Activated naive CD4-positive, alpha-beta T cell treated with anti-CD3 and anti-CD28 coated beads for 36 hours (primary cell): ENCODE measurements at regions of chr12 and their contacts with region 1.

Region 1: GRCh38 chr12:65169320-65170208 is at the start of gene LEMD3:
- DNase-seq: peak; percentile 96
- H3K4me3 Mint-ChIP-seq: peak within 1 kb of the TSS; percentile 85
- H3K27ac Mint-ChIP-seq: peak within 1 kb of the TSS; percentile 91
- H3K4me1 Mint-ChIP-seq: peaks cover 19% of the 10 kb centered on the region
- H3K27me3 Mint-ChIP-seq: no peaks in the 10 kb centered on the region
- total RNA-seq, gene LEMD3: 16.5 to 17.5 TPM

Region 2: GRCh38 chr12:64459394-64459891 is 710.1 kb before region 1 on chr12:
- CTCF ChIA-PET with region 1: no interaction called
- intact Hi-C with region 1: loop called (anchors 5 kb)
- DNase-seq: peak; percentile 14
- H3K4me3 Mint-ChIP-seq: peak overlapping the region; percentile 72
- H3K27ac Mint-ChIP-seq: peak overlapping the region; percentile 85
- H3K4me1 Mint-ChIP-seq: peaks cover 38% of the 10 kb centered on the region
- H3K27me3 Mint-ChIP-seq: no peaks in the 10 kb centered on the region

Region 3: GRCh38 chr12:65121049-65121955 is 48.3 kb before region 1 on chr12 and contains the start of gene WIF1:
- CTCF ChIA-PET with region 1: interaction called, 3 read pairs
- intact Hi-C with region 1: loop called (anchors 2 kb)
- DNase-seq: peak; percentile 28
- H3K4me3 Mint-ChIP-seq: peak within 1 kb of the TSS; percentile 41
- H3K27ac Mint-ChIP-seq: no peak within 1 kb of the TSS
- H3K4me1 Mint-ChIP-seq: peaks cover 3% of the 10 kb centered on the region
- H3K27me3 Mint-ChIP-seq: peaks cover 24% of the 10 kb centered on the region
- total RNA-seq, gene WIF1: 0.20 TPM in 1 of 2 experiments, not detected in the other

Region 4: DNA sequence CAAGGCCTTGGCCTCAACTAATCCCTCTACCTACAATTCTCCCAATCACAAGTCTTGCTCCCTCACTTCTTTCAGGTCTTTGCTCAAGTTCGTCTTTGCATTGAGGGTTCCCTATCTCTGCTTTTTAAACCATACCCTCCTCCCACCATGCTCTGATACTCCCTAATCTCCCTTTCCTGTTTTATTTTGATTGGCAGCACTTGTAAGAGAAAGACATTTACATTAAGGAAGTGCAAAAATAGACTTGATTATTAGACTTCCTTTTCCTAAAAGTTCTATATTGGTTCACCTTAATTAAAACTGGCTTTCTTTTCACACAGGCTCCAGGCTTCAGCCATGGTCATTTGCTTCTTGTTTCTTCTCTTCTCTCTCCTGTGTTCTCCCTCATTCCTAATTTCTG is 30.2 kb before region 1 on chr12:
- CTCF ChIA-PET with region 1: no interaction called
- intact Hi-C with region 1: no loop called
- DNase-seq: no peak
- H3K4me3 Mint-ChIP-seq: no peak overlapping the region
- H3K27ac Mint-ChIP-seq: no peak overlapping the region
- H3K4me1 Mint-ChIP-seq: no peaks in the 10 kb centered on the region
- H3K27me3 Mint-ChIP-seq: peaks cover 13% of the 10 kb centered on the region

Region 5: DNA sequence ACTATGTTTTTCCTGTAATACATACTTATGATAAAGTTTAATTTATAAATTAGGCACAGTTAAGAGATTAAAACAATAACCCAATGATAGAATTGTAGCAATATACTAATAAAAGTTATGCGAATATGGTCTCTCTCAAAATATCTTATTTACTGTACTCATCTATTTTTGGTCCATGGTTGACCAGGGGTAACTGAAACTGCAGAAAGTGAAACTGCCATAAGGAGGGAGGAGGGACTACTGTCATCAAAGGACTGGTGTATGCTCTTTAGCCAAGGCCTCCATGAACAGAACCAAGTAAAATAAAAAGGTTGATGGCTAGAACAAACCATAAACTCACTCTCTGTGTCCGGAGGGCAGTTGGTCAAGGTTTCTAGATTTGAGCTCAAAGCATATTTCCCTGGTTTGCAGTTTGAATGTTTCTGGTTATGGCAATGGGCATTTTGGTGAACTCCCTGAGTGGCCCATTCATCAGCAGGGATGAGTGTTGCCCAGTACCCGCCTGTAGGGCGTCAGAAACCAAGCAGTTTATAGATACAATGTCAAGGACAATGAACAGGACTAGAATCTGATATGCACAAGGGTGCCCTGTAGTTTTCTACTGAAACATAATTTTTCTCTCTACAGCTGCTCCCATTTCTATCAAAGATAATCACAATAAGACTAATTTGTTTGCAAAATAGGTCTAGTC is 19.6 kb after region 1 on chr12:
- CTCF ChIA-PET with region 1: interaction called, 3 read pairs
- intact Hi-C with region 1: loop called (anchors 2 kb)
- DNase-seq: no peak
- H3K4me3 Mint-ChIP-seq: no peak overlapping the region
- H3K27ac Mint-ChIP-seq: no peak overlapping the region
- H3K4me1 Mint-ChIP-seq: peaks cover 58% of the 10 kb centered on the region
- H3K27me3 Mint-ChIP-seq: no peaks in the 10 kb centered on the region

Region 6: GRCh38 chr12:65232476-65233077 is 63.0 kb after region 1 on chr12:
- CTCF ChIA-PET with region 1: interaction called, 8 read pairs
- intact Hi-C with region 1: loop called (anchors 1 kb)
- DNase-seq: no peak
- H3K4me3 Mint-ChIP-seq: no peak overlapping the region
- H3K27ac Mint-ChIP-seq: no peak overlapping the region
- H3K4me1 Mint-ChIP-seq: peaks cover 11% of the 10 kb centered on the region
- H3K27me3 Mint-ChIP-seq: no peaks in the 10 kb centered on the region

Region 7: GRCh38 chr12:65403188-65403587 is 233.6 kb after region 1 on chr12:
- CTCF ChIA-PET with region 1: no interaction called
- intact Hi-C with region 1: no loop called
- DNase-seq: no peak
- H3K4me3 Mint-ChIP-seq: no peak overlapping the region
- H3K27ac Mint-ChIP-seq: no peak overlapping the region
- H3K4me1 Mint-ChIP-seq: no peaks in the 10 kb centered on the region
- H3K27me3 Mint-ChIP-seq: no peaks in the 10 kb centered on the region

Region 8: DNA sequence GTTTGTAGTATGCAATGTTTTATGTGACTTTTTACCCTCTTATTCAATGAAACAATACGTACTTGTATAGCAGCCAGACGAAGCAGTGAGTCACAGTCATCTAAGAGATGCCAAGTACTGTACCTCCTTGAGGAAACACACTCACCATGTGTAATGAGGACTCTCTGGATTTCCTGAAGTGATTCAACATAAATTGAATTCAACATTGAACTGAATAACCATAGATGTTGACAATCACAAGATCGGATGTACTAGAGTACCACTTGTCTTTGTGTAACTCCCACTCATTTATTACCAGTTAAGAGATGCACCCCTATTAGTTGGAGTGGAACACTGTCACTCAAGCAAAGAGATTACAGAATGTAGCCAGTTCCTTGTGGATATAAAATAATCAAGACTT is 479.6 kb after region 1 on chr12:
- CTCF ChIA-PET with region 1: no interaction called
- intact Hi-C with region 1: no loop called
- DNase-seq: no peak
- H3K4me3 Mint-ChIP-seq: no peak overlapping the region
- H3K27ac Mint-ChIP-seq: no peak overlapping the region
- H3K4me1 Mint-ChIP-seq: no peaks in the 10 kb centered on the region
- H3K27me3 Mint-ChIP-seq: peaks cover 17% of the 10 kb centered on the region

Region 9: DNA sequence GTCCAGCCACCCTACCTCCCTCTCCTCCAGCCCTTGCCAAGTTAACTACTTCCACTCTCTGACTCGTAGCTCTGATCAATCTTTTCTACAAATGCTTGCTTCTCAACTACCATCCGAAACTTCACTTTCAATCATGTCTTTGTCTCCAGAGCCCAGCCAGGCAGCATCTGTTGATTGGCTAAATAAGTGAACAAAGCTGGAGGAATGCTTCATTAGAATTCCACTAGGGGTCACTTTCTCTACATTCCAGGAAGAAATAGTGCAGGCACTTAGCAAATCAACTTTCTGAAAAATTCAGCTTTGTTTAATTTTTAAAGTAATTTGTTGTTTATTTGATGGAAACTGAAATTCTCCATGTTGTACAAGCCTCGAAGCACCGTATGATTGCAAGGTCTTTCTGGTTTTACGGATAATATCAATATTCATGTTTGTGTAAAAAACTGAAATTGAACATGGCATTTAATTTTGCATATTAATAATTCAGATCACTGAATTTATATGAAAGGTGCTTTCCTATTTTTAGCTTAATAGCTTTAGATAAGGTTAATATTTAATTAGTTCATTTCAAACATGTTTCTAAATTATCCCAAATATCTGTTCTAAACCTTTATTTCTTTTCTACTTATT is 1100.3 kb after region 1 on chr12:
- CTCF ChIA-PET with region 1: no interaction called
- intact Hi-C with region 1: no loop called
- DNase-seq: peak; percentile 52
- H3K4me3 Mint-ChIP-seq: no peak overlapping the region
- H3K27ac Mint-ChIP-seq: no peak overlapping the region
- H3K4me1 Mint-ChIP-seq: peaks cover 5% of the 10 kb centered on the region
- H3K27me3 Mint-ChIP-seq: peaks cover 3% of the 10 kb centered on the region

Region 10: GRCh38 chr12:66301944-66302826 is 1132.6 kb after region 1 on chr12 and contains the start of gene HELB:
- CTCF ChIA-PET with region 1: no interaction called
- intact Hi-C with region 1: loop called (anchors 1 kb)
- DNase-seq: peak; percentile 99
- H3K4me3 Mint-ChIP-seq: peak within 1 kb of the TSS; percentile 100
- H3K27ac Mint-ChIP-seq: peak within 1 kb of the TSS; percentile 100
- H3K4me1 Mint-ChIP-seq: peaks cover 36% of the 10 kb centered on the region
- H3K27me3 Mint-ChIP-seq: no peaks in the 10 kb centered on the region
- total RNA-seq, gene HELB: 23.0 to 23.7 TPM